Gastrocnemius medialis (tissue), 4 donors: ENCODE measurements at regions of chr16 and their contacts with region 1.

Region 1: GRCh38 chr16:84144859-84145639 is at the starts of genes DNAAF1 and HSDL1:
- DNase-seq: peak; percentile 78 to 84
- ATAC-seq: peak; percentile 89 to 95
- H3K4me3 ChIP-seq: peak within 1 kb of the TSS; percentile 66 to 92 (median 80)
- H3K27ac ChIP-seq: peak within 1 kb of the TSS; percentile 77 to 89 (median 85)
- H3K4me1 ChIP-seq: peaks cover 8 to 21% of the 10 kb centered on the region in 2 donors
- H3K27me3 ChIP-seq: no peaks in the 10 kb centered on the region
- CTCF ChIP-seq: peak in 1 of 5 experiments; percentile 28
- POLR2A ChIP-seq: peak; percentile 76 to 83
- total RNA-seq, gene DNAAF1: not detected
- total RNA-seq, gene HSDL1: 20.2 to 26.8 (median 22.6) TPM

Region 2: GRCh38 chr16:83807710-83808572 is 337.1 kb before region 1 on chr16 and contains the start of gene HSBP1:
- in situ Hi-C with region 1: no loop called
- intact Hi-C with region 1: loop called (anchors 5 kb)
- DNase-seq: peak; percentile 89 to 94
- ATAC-seq: peak; percentile 96
- H3K4me3 ChIP-seq: peak within 1 kb of the TSS; percentile 85 to 96 (median 90)
- H3K27ac ChIP-seq: peak within 1 kb of the TSS; percentile 73 to 86 (median 84)
- H3K4me1 ChIP-seq: peaks cover 10 to 17% of the 10 kb centered on the region in 2 donors
- H3K27me3 ChIP-seq: no peaks in the 10 kb centered on the region
- CTCF ChIP-seq: peak in 2 of 5 experiments; percentile 13 to 20
- POLR2A ChIP-seq: peak; percentile 68
- total RNA-seq, gene HSBP1: 7.5 to 28.0 (median 8.7) TPM

Region 3: DNA sequence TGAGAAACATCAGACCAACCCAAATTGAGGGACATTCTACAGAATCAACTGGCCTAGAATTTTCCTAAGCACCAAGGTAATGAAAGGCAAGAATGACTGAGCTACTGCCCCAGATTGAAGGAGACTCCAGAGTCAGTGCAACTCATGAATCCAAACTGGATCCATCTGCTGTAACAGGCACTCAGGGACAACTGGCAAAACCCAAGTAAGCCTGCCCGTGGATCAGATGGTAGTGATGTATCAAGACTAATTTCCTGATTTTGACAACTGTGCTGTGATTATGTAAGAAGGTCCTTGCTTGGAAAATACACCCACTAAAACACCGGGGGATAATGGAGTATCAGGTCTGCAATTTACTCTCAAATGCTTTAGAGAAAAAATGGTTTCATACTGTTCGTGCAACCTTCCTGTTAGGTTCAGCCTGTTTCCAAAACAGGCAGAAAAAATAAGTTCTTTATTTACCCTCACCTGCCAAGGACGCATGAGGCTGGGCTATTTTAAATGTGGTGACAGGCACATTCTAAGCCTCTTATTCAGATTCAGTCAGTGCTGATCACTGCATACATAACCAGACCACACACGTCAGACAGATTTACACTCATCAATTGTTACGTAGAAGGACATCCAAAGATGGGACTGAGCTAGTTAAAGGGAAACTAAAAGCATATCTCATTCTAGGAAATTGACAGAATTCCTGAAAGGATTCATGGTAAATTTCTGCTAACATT is 35.3 kb before region 1 on chr16:
- in situ Hi-C with region 1: no loop called
- intact Hi-C with region 1: loop called (anchors 5 kb)
- DNase-seq: peak; percentile 32 to 35
- ATAC-seq: peak; percentile 89 to 95
- H3K4me3 ChIP-seq: no peak overlapping the region
- H3K27ac ChIP-seq: peak overlapping the region; percentile 72 to 86 (median 79)
- H3K4me1 ChIP-seq: peaks cover 56 to 61% of the 10 kb centered on the region in 2 donors
- H3K27me3 ChIP-seq: no peaks in the 10 kb centered on the region
- CTCF ChIP-seq: no peak
- POLR2A ChIP-seq: peak in 1 of 2 donors; percentile 22

Region 4: DNA sequence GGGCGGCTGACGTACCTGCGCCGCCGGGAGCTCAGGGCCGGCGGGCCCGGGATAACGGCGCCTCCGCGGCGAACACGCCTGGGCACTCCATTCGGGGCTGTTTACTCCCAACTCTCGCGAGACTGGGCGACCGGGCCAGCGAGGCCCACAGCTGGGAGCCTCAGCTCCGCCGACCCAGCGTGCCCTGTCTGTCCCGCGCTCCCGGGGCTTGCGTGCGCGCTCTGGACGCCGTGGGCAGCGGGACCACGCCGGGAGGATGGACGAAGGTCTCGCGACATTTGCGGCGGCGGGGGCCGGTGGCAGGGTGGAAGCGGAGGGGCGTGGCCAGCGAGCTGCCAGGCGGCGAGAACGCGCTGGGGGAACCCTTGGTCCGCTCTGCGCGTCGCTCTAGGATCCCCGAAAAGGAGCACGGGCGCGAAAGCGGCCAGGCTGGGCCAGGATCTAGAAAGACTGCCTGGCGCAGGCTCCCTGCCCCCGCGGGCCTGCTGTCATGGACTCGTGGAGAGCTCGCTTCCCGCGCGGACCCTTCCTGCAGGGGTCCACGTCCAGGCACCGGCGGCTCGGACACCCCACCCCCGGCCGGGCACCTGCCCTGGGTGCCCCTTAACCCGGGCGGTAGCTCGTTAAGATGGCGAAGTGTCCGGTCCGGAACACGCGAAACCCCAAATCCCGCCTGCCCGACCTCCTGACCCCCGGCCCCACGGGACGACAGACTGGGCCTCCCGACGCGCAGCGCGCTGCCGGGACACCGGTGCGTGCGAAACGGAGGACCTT is 28.1 kb before region 1 on chr16 and contains the start of gene MBTPS1:
- in situ Hi-C with region 1: no loop called
- intact Hi-C with region 1: loop called (anchors 1 kb)
- DNase-seq: peak; percentile 96 to 97
- ATAC-seq: peak; percentile 93
- H3K4me3 ChIP-seq: peak within 1 kb of the TSS; percentile 90 to 99 (median 96)
- H3K27ac ChIP-seq: peak within 1 kb of the TSS; percentile 90 to 94 (median 92)
- H3K4me1 ChIP-seq: peaks cover 28 to 38% of the 10 kb centered on the region in 2 donors
- H3K27me3 ChIP-seq: no peaks in the 10 kb centered on the region
- CTCF ChIP-seq: peak in 2 of 5 experiments; percentile 69 to 74
- POLR2A ChIP-seq: peak; percentile 86 to 88
- total RNA-seq, gene MBTPS1: 28.8 to 44.3 (median 38.5) TPM

Region 5: DNA sequence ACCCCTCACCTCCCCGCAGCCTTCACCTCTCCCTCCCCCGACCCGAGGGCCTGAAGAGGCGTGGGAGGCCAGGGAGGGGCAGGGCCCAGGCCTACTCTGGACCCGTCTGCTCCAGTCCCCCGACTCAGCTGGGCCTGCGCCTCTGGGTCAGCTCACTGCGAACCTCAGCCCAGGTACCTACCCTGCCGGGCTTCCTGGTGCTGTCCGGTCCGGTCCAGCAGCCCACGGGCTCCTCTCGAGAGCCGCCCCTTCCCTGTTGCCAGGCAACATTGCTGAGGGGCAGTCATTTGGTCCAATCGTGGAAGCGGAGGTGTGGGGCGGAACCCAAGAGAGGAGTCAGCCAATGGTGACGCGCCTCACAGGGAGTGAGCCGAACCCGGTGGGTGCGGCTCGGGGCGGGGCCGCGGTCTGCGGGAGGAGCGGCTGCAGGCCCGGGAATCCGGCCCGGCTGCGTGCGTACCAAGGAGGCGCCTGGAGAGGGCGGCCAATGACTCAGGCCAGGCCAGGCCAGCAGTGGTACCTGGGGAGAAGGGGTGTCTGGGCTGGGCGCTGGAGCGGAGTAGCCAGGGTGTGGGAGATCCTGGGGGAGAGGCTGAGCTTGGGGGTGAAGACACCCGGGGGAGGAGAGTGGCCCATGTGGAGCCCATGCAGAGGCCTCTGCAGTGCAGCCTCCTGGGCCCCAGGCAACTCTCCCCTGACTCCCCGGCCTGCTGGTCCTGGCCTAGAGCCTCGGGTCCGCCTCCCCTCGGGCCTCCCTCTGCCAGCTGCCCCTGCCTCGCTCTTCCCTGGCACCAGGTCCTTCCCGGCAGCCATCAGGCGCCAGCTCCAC is 359.6 kb after region 1 on chr16 and contains the start of gene MEAK7:
- in situ Hi-C with region 1: no loop called
- intact Hi-C with region 1: no loop called
- DNase-seq: peak; percentile 97 to 98
- ATAC-seq: peak; percentile 97 to 98
- H3K4me3 ChIP-seq: peak within 1 kb of the TSS; percentile 79 to 95 (median 90)
- H3K27ac ChIP-seq: peak within 1 kb of the TSS; percentile 89 to 94 (median 92)
- H3K4me1 ChIP-seq: peaks cover 14 to 27% of the 10 kb centered on the region in 2 donors
- H3K27me3 ChIP-seq: no peaks in the 10 kb centered on the region
- CTCF ChIP-seq: no peak
- POLR2A ChIP-seq: peak; percentile 75 to 76
- total RNA-seq, gene MEAK7: 2.6 to 7.1 (median 5.0) TPM